B cell (primary cell): ENCODE measurements at regions of chr5 and their contacts with region 1.

Region 1: DNA sequence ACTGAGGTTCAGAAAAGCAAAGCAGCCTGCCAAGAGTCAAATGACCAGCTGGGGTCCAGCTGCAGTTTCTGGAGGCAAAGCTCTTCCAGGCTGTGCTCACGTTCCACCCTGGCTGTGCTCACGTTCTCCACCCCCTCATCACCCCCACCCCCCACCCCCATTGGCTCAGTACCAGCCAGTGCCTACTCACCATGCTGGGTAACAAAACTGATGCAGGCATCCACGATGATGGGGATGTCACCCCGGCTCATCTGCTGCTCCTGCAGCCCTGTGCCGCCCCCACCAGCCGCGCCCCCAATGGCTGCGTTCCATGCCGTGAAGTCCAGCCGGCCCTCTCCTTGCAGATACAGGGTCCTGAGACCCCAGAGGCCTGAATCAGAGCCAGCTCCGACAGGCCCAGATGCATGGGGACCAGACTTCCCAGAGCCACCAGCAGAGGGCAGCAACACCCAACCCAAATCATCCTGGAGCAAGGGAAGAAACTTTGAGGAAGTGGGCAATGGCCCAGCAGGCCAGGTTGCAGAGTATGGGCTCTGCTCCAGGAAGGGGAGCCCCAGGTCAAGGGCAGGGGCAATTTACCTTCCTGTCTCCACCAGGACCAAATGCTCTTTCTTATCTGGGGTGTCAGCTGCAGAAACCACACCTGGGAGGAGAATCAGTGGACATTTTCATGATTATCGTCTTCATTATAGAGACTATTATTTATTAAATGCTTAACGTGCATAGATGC is 13.7 kb upstream of the FCHSD1 start:
- DNase-seq: peak; percentile 85
- ATAC-seq: peak; percentile 98
- H3K4me3 ChIP-seq: no peak overlapping the region
- H3K4me3 Mint-ChIP-seq: no peak overlapping the region
- H3K27ac ChIP-seq: no peak overlapping the region
- H3K27ac Mint-ChIP-seq: no peak overlapping the region
- H3K4me1 ChIP-seq: peaks cover 4 to 6% of the 10 kb centered on the region in 2 donors
- H3K4me1 Mint-ChIP-seq: peaks cover 4% of the 10 kb centered on the region
- H3K27me3 ChIP-seq: peaks cover 0 to 4% (median 0%) of the 10 kb centered on the region in 4 experiments
- H3K27me3 Mint-ChIP-seq: peaks cover 5% of the 10 kb centered on the region
- CTCF ChIP-seq: peak; percentile 91

Region 2: DNA sequence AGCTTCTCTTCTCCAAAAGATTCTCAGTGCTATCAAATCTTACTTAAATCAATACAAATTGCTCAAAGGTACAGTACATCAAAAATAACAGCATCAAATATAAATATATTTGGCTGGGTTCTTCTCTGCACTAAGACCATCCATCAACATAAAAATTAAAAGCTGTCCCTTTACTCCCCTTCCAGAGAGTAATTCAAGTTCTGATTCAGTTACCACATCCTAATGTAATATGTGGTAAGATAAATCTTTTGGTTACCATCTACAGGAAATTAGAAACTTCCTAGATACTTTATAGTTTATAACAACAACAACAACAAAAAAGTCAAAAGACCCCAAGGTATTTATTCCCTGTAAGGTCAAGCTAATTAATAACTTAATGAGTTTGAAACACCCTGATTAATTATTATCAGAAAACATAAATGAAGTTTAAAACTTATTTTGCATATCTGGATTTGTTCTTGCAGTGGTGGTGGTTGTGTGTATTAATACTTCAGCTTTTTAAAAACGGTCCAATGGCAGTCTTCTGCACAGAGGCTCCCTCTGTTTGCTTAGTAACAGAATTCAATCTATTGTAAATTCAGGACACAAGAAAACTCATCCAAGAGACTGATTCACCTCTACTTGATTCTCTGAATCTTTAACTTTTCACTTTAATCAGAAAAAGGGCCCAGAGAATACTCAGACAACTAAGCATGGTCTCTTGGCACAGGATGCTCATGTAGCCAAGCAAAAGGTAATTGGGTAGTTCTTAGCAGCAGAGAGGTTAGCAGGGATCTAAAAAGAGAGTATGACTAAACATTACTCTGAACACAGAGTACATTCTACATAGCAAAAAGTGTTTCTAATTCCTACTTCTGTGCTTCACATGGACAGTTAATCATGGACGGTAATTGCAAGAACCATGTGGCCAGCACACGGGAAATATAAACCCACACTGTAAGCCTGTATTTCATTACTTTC is 66.2 kb before region 1 on chr5:
- CTCF ChIA-PET with region 1: interaction called, 19 read pairs
- POLR2A ChIA-PET with region 1: no interaction called
- intact Hi-C with region 1: no loop called
- DNase-seq: no peak
- ATAC-seq: no peak
- H3K4me3 ChIP-seq: no peak overlapping the region
- H3K4me3 Mint-ChIP-seq: peak overlapping the region; percentile 12
- H3K27ac ChIP-seq: peak overlapping the region in 1 of 2 donors; percentile 61
- H3K27ac Mint-ChIP-seq: no peak overlapping the region
- H3K4me1 ChIP-seq: peaks cover 23 to 40% of the 10 kb centered on the region in 2 donors
- H3K4me1 Mint-ChIP-seq: peaks cover 61% of the 10 kb centered on the region
- H3K27me3 ChIP-seq: no peaks in the 10 kb centered on the region
- H3K27me3 Mint-ChIP-seq: no peaks in the 10 kb centered on the region
- CTCF ChIP-seq: no peak

Region 3: DNA sequence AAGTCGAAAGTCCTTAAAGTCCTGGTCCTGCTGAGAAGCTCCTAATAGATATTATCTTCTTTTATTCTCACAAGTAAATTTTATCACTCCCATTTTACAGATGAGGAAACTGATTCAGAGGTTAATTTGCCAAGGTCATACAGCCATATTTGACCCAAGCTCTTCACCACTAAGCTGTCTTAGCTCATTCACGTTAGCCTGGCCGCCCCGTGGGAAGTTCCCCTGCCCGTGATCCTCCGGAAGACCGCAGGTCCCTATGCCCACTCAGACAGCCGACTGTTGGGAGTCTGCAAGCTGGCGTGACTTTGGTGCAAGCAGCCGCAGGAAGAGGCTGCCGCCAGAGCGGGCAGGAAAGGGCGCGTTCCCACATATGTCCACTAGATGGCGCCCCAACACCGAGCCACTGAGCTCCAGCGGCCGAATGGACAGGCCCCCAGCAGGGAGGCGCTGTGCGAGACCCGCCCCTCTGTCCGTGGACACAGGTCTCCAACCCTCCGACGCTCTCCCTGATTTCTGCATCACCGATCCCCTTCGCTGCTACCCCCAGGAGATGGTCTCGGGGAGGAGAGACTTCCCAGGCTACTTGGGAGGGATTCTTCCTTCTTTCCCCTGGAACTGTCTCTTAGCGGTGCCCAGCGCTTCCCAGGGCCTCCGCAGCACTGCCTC is 27.1 kb after region 1 on chr5:
- CTCF ChIA-PET with region 1: interaction called, 28 read pairs
- POLR2A ChIA-PET with region 1: no interaction called
- intact Hi-C with region 1: no loop called
- DNase-seq: peak; percentile 86
- ATAC-seq: peak; percentile 95
- H3K4me3 ChIP-seq: peak overlapping the region in 4 of 5 experiments; percentile 3 to 57 (median 33)
- H3K4me3 Mint-ChIP-seq: peak overlapping the region; percentile 44
- H3K27ac ChIP-seq: no peak overlapping the region
- H3K27ac Mint-ChIP-seq: no peak overlapping the region
- H3K4me1 ChIP-seq: peaks cover 8% of the 10 kb centered on the region in 2 donors
- H3K4me1 Mint-ChIP-seq: peaks cover 7% of the 10 kb centered on the region
- H3K27me3 ChIP-seq: peaks cover 0 to 47% (median 7%) of the 10 kb centered on the region in 4 experiments
- H3K27me3 Mint-ChIP-seq: peaks cover 68% of the 10 kb centered on the region
- CTCF ChIP-seq: peak; percentile 98

Region 4: DNA sequence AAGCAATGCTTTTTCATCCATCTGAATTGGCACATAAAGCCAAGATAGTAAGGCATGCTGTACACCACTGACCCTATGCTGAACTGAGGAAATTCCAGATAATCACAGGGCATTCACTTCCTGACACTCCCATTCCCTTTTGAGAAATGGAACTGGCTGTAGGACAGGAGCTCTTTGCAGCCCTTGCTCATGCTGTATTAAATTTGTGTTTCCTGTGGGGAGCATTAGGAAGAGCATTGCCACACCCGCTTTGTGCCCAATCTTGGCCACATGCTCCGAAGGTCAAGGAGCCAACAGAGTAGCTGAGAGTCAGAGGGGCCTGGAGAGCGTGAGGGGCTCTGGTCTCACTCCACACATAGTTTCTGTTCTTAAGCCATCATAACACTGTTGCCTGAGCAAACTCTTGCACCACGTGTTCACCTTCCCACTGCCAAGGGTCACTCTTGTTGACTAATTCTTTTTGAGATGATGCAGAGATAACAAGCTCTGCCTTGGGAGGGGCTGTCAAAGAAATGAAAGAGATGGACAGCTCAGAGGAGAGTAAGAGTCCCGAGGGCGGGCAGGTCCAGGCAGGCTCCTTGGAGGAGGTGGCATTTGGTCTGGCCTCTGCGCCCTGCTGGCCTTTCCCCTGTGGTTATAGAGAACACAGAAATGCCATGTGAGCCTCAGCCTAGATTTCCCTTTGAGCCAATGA is 48.9 kb after region 1 on chr5:
- CTCF ChIA-PET with region 1: no interaction called
- POLR2A ChIA-PET with region 1: no interaction called
- intact Hi-C with region 1: no loop called
- DNase-seq: no peak
- ATAC-seq: no peak
- H3K4me3 ChIP-seq: no peak overlapping the region
- H3K4me3 Mint-ChIP-seq: no peak overlapping the region
- H3K27ac ChIP-seq: no peak overlapping the region
- H3K27ac Mint-ChIP-seq: no peak overlapping the region
- H3K4me1 ChIP-seq: no peaks in the 10 kb centered on the region
- H3K4me1 Mint-ChIP-seq: no peaks in the 10 kb centered on the region
- H3K27me3 ChIP-seq: peaks cover 0 to 18% (median 1%) of the 10 kb centered on the region in 4 experiments
- H3K27me3 Mint-ChIP-seq: peaks cover 37% of the 10 kb centered on the region
- CTCF ChIP-seq: no peak

Region 5: DNA sequence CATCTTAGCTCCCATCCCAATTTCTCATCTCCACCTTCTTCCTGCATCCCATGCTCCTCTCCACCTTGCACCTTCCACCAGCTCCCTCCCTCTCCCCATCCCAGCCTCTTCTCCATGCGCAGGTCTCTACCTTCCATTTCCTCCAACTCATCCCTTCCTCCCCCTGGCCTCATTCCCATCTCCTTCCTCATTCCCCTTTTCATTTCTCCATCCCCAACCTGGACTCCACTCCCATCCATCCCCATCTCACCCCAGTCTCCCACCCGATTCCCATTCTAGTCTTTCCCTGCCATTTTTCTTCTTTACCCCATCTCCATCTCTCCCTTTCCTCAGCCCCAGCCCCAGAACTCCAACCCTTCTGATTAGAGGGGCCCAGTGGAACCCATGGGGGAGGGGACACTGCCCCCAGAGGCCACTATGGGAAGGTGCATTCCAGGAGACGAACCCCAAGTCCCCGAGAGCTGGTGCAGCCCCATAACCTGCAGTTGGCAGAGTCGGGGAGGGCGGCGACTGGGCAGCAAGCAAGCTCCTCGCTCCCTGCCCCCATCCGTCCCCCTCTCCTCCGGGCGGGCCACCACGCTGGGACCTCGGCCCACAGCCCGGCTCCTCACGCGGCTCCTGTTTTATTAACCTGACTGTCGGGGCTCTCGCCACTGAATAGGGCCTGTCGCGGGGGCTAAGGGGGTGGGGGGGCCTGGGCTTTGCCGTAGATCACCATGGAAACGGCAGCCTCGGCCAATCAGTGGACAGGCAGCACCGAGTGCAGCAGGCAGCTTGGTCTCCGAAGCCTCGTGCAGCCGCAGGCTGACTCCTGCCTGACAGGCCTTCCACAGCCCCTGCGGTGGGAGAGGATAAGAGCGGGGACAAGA is 146.6 kb after region 1 on chr5:
- CTCF ChIA-PET with region 1: interaction called, 3 read pairs
- POLR2A ChIA-PET with region 1: no interaction called
- intact Hi-C with region 1: loop called (anchors 1 kb)
- DNase-seq: peak; percentile 48
- ATAC-seq: peak; percentile 67
- H3K4me3 ChIP-seq: no peak overlapping the region
- H3K4me3 Mint-ChIP-seq: no peak overlapping the region
- H3K27ac ChIP-seq: no peak overlapping the region
- H3K27ac Mint-ChIP-seq: no peak overlapping the region
- H3K4me1 ChIP-seq: no peaks in the 10 kb centered on the region
- H3K4me1 Mint-ChIP-seq: no peaks in the 10 kb centered on the region
- H3K27me3 ChIP-seq: peaks cover 0 to 36% (median 9%) of the 10 kb centered on the region in 4 experiments
- H3K27me3 Mint-ChIP-seq: peaks cover 65% of the 10 kb centered on the region
- CTCF ChIP-seq: peak; percentile 72

Region 6: DNA sequence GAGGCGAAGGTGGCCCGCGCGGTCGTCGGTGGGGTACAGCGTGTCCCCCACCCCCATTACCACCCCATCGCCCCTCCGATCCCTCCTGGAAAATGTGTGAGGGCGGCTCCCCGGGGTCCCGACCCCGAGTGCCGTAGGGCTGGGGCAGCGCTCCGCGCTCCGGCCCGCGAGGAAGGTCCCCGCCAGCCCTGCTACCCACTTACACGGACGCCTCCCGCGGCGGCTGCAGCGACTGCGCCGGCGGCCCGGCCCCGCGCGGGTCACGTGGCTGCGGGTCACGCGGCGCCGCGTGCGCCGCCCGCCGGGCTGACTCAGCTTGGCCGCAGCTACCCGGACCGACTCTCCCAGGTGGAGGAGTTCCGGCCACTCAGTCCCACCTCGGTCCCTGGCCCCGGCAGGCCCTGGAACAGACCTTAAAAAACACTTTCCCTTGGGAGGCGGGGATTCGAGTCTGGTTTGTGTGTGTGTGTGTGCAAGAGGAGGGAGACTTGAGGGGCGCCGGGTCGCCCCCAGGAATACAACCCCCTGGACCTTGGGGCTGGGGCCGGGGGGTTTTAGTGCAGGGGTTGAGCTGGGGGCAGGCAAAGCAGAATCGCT is 348.0 kb after region 1 on chr5 and contains the start of gene GNPDA1:
- CTCF ChIA-PET with region 1: interaction called, 12 read pairs
- POLR2A ChIA-PET with region 1: no interaction called
- intact Hi-C with region 1: loop called (anchors 1 kb)
- DNase-seq: peak; percentile 83
- ATAC-seq: peak; percentile 88
- H3K4me3 ChIP-seq: peak within 1 kb of the TSS; percentile 44 to 74 (median 67)
- H3K4me3 Mint-ChIP-seq: peak within 1 kb of the TSS; percentile 89
- H3K27ac ChIP-seq: peak within 1 kb of the TSS; percentile 45 to 59
- H3K27ac Mint-ChIP-seq: peak within 1 kb of the TSS; percentile 78
- H3K4me1 ChIP-seq: peaks cover 27 to 30% of the 10 kb centered on the region in 2 donors
- H3K4me1 Mint-ChIP-seq: peaks cover 43% of the 10 kb centered on the region
- H3K27me3 ChIP-seq: no peaks in the 10 kb centered on the region
- H3K27me3 Mint-ChIP-seq: peaks cover 3% of the 10 kb centered on the region
- CTCF ChIP-seq: no peak
- total RNA-seq, gene GNPDA1: 12.1 and 15.0 TPM in 2 replicates